Prostate gland (tissue), 2 donors: ENCODE measurements at regions of chr5 and their contacts with region 1.

Region 1: DNA sequence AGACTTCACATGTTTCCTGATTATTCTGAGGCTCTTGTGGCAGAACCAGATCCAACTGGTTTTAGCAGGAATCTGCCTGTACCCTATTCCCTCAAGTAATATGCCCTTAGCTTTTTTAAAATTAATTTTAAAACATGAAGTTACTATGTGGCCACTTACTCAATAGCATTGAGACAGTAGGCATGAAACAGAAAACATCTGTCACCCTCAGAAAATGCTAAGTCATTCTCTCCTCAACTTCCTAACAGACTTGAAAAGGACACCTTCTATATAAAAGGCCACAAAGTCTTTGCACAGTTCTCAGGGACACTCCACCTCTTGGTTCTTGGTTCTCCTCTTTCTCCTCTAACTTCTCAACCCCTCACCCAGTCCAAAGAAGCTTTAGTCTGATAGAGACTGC is 277.8 kb downstream of the RAB3C start:
- DNase-seq: no peak
- H3K4me3 ChIP-seq: no peak overlapping the region
- H3K27ac ChIP-seq: no peak overlapping the region
- H3K4me1 ChIP-seq: no peaks in the 10 kb centered on the region
- H3K27me3 ChIP-seq: no peaks in the 10 kb centered on the region
- CTCF ChIP-seq: no peak
- POLR2A ChIP-seq: no peak

Region 2: GRCh38 chr5:58838732-58839131 is 21.9 kb before region 1 on chr5:
- intact Hi-C with region 1: loop called (anchors 2 kb)
- DNase-seq: no peak
- H3K4me3 ChIP-seq: no peak overlapping the region
- H3K27ac ChIP-seq: no peak overlapping the region
- H3K4me1 ChIP-seq: no peaks in the 10 kb centered on the region
- H3K27me3 ChIP-seq: no peaks in the 10 kb centered on the region
- CTCF ChIP-seq: no peak
- POLR2A ChIP-seq: no peak